Activated naive CD8-positive, alpha-beta T cell treated with anti-CD3 and anti-CD28 coated beads, Interleukin-2, amount 10 ng/mL, durations not matched to agents 7 days and 5 days (primary cell): ENCODE measurements at regions of chr12 and their contacts with region 1.

Region 1: DNA sequence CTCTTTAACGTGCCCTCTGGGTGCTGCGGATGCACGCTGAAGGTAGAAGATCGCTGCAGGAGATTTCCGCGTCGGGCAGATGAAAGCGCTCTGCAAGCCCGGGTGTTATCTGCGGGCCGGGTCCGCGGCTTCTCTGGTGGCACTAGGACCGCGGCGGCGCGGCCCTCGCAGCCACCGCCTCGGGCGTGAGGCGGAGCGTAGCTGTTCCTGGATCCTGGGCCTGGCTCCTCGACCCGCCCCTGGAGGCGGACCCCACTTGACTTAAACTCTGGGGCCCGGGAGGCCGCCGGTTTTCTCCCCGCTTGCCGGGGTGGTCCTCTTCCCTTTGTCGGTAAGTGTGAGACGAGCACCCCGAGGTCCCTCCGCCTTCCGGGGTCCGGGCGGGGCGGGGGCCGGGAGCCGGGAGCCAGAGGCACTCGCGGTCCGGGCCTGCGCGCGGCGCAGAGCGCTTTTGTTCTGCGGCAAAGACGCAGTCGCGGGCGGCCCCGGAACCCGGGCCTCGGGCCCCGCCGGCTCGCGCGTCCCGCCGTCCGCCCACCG is at the start of gene RESF1:
- DNase-seq: peak; percentile 92
- ATAC-seq: peak; percentile 81
- H3K4me3 Mint-ChIP-seq: peak within 1 kb of the TSS; percentile 93
- H3K27ac Mint-ChIP-seq: peak within 1 kb of the TSS; percentile 94
- H3K4me1 Mint-ChIP-seq: peaks cover 52% of the 10 kb centered on the region
- H3K27me3 Mint-ChIP-seq: no peaks in the 10 kb centered on the region
- total RNA-seq, gene RESF1: 252 to 261 TPM

Region 2: DNA sequence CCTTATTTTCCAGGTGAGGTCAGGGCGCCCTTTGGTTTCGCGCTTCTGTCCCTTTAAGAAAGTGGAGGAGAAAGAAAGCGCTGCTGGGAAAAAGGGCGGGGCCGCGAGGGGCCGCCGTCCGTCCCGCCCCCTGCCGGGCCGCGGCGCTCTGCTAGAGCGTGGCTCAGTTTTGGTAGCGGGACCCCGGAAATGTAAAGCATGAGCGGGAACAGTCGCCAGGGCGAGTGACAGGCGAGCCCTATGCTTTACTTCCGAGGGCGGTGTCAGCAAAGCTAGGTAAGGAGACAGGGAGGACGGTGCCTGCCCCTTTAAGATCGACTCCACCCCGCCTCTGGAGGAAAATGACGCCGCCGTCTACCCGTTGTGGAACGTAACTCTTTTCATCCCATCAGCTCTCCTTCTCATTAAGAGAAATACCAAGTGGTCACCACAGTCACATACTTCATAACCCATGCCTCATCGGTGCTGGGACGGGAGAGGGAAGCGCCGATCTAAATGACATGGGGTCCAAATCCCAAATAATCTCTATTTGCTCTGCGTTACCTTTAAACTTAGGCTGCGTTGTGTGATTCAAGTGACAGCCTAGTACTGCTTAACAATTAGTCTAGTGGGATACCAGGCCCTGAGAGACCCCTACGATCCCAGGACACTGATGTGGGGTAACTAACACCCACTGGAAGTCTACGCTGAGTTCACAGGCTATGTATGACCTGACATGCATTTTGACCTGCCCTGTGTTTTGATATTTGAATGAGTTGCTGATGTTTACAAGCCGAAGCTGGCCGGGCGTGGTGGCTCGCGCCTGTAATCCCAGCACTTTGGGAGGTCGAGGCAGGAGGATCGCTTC is 299.9 kb before region 1 on chr12 and contains the start of gene ETFBKMT:
- POLR2A ChIA-PET with region 1: interaction called, 13 read pairs
- DNase-seq: peak; percentile 93
- ATAC-seq: peak; percentile 100
- H3K4me3 Mint-ChIP-seq: peak within 1 kb of the TSS; percentile 97
- H3K27ac Mint-ChIP-seq: peak within 1 kb of the TSS; percentile 100
- H3K4me1 Mint-ChIP-seq: peaks cover 9% of the 10 kb centered on the region
- H3K27me3 Mint-ChIP-seq: no peaks in the 10 kb centered on the region
- total RNA-seq, gene ETFBKMT: 1.1 to 1.6 TPM

Region 3: DNA sequence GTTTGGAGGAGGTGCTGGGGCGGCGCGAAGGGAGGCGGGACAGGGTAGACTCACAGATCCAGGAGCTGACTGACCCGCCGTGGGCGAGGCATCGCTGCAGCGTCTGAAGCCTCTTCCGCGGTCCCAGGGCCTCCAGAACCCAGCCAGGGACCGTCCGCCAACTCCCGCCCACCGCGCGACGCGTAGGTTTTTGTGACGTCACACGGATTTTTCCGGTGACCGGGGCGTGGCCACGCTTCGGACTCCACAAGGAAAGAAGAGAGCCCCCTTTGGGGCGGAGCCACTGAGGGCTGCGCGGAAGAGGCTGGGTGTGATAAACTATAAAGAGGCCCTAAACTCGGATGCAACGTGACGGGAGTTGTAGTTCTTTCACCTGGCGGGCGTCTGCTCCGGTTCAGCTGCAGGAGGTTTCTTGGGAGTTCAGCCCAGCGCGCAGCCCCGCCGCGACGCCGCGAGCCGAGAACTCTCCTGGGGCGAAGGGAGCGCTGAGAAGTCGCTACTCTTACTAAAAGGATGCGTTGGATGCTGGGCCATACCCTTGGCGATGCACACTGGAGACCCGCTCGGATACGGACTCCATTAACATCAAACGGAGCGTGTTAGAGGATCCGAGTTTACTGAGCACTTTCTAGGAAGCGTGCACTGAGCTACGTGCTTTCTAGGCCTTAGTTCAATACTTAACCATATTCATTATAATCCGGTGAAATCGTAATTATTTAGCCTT is 230.2 kb before region 1 on chr12 and contains the start of gene AMN1:
- POLR2A ChIA-PET with region 1: interaction called, 24 read pairs
- DNase-seq: peak; percentile 99
- ATAC-seq: peak; percentile 97
- H3K4me3 Mint-ChIP-seq: peak within 1 kb of the TSS; percentile 95
- H3K27ac Mint-ChIP-seq: peak within 1 kb of the TSS; percentile 98
- H3K4me1 Mint-ChIP-seq: peaks cover 28% of the 10 kb centered on the region
- H3K27me3 Mint-ChIP-seq: no peaks in the 10 kb centered on the region
- total RNA-seq, gene AMN1: 5.9 to 7.3 TPM

Region 4: DNA sequence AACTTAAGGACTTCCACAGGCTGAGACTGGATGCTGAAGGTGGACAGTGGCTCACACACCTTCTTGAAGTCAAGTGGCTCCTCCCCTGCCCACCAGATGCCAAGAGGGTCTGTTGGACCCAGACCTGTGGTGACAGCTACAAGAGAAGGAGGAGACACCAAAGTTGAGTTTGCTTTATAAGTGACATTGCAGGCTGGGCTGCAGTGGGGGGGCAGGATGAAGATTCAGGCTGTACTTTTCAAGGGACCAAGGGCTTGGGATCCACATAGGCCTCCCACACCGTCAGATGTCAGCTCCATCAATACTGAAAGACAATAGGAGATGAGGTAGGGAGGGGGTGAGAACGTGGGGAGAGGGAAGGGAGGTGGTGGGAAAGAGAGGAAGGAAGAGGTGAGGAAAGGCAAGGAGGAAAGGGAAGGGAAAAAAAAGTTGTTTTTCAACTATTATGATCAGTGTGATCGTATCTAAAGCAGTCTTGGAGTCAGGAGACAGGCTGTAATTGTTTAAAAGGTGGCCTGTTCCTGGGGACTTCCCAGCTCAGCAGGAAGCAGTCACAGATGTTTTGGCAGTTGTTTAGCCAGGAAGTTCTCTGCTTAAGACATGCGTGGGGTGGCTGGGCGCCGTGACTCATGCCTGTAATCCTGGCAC is 84.1 kb before region 1 on chr12:
- POLR2A ChIA-PET with region 1: interaction called, 10 read pairs
- DNase-seq: no peak
- ATAC-seq: peak; percentile 96
- H3K4me3 Mint-ChIP-seq: peak overlapping the region; percentile 74
- H3K27ac Mint-ChIP-seq: peak overlapping the region; percentile 99
- H3K4me1 Mint-ChIP-seq: peaks cover 16% of the 10 kb centered on the region
- H3K27me3 Mint-ChIP-seq: no peaks in the 10 kb centered on the region

Region 5: DNA sequence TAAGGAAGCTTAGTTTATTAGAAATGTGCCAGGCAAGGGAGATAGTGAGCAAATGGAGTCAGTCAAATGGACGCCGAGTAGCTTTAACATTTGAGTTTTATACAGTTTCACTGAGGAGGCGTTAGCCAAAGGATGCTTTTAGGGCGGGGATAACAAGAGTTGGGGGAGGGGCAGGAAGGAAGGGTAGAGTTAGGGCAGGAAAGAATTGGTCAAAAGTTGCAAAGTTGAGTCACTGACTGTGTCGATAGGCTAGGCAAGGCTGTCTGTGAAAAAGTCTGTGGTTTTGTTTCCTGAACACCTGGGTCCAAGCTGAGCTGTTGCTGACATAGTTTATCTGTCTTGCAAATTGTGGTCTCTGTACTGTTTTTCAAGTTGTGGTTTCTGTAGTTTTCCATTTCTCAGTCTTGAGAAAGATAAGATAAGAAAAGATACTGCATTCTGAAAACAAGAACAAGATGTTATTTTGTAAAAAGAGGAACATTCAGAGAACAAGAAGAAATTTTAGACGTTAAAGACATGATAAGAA is 62.7 kb before region 1 on chr12:
- POLR2A ChIA-PET with region 1: interaction called, 32 read pairs
- DNase-seq: peak; percentile 49
- ATAC-seq: peak; percentile 98
- H3K4me3 Mint-ChIP-seq: peak overlapping the region; percentile 76
- H3K27ac Mint-ChIP-seq: peak overlapping the region; percentile 97
- H3K4me1 Mint-ChIP-seq: peaks cover 38% of the 10 kb centered on the region
- H3K27me3 Mint-ChIP-seq: no peaks in the 10 kb centered on the region